ENCODE measurements at regions of chr18 and their contacts with region 1.

Region 1: GRCh38 chr18:23416298-23416697 is 36.8 kb upstream of the RIOK3 start:
- DNase-seq: no peak
- H3K4me3 ChIP-seq: no peak overlapping the region
- H3K27ac ChIP-seq: no peak overlapping the region
- H3K4me1 ChIP-seq: peaks cover 16% of the 10 kb centered on the region
- H3K27me3 ChIP-seq: no peaks in the 10 kb centered on the region
- CTCF ChIP-seq: no peak

Region 2: GRCh38 chr18:22831441-22831904 is 584.8 kb before region 1 on chr18:
- intact Hi-C with region 1: loop called (anchors 10 kb)
- DNase-seq: no peak
- H3K4me3 ChIP-seq: no peak overlapping the region
- H3K27ac ChIP-seq: no peak overlapping the region
- H3K4me1 ChIP-seq: no peaks in the 10 kb centered on the region
- H3K27me3 ChIP-seq: peaks cover 15% of the 10 kb centered on the region
- CTCF ChIP-seq: no peak